PC-9 (cell line): ENCODE measurements at regions of chr5 and their contacts with region 1.

Region 1: GRCh38 chr5:172770675-172771438 is at the start of gene DUSP1:
- DNase-seq: peak; percentile 84 to 98
- H3K4me3 ChIP-seq: peak within 1 kb of the TSS; percentile 91
- H3K27ac ChIP-seq: peak within 1 kb of the TSS; percentile 93
- H3K4me1 ChIP-seq: peaks cover 61% of the 10 kb centered on the region
- H3K27me3 ChIP-seq: no peaks in the 10 kb centered on the region
- CTCF ChIP-seq: peak; percentile 50; the same call in 1 of the 2 replicates
- total RNA-seq, gene DUSP1: 10.3 and 18.4 TPM in 2 replicates

Region 2: DNA sequence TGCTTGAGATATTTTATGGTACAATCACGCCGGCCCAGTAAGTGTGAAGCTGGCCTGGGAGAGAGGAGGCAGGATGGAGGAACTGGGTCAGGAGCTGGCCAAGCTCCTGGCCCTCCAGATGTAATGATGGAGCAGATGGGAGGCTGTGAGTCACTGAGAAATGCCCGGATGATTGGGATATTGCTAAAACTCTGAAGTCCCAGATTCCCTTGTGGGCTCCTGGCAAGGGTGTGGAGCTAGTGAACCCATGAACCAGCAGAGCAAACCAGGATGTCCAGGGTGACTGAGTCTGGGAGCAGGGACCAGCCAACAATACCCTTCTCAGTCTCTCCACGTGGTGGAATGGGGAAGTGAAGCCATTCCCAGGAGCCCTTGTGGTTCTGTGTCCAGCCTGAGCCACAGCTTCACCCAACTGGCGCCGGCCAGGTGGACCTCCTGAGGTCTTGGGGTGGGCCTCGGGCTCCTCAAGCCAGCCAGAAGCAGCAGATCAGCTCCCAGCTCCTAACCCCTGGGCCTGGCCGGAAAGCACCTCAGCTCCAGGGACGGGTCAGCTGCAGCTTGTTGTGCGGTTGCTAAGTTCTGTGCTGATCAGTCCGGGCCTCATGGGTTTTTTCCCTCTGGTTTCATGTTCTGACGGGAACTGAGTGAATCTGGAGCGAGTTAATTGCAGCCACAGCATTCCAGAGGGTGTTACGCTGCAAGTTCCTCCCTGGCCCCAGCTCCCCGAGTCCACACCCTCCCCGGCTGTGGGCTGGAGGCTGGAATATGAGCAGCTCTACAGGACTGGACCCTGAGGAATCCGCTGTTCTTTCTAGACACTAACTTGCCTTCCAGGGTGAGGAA is 37.5 kb before region 1 on chr5:
- CTCF ChIA-PET with region 1: interaction called, 3 read pairs
- POLR2A ChIA-PET with region 1: interaction called, 9 read pairs
- intact Hi-C with region 1: loop called (anchors 1 kb)
- DNase-seq: peak; percentile 89
- H3K4me3 ChIP-seq: peak overlapping the region; percentile 5; the same call in 1 of the 2 replicates
- H3K27ac ChIP-seq: peak overlapping the region; percentile 96
- H3K4me1 ChIP-seq: peaks cover 44% of the 10 kb centered on the region
- H3K27me3 ChIP-seq: no peaks in the 10 kb centered on the region
- CTCF ChIP-seq: no peak

Region 3: DNA sequence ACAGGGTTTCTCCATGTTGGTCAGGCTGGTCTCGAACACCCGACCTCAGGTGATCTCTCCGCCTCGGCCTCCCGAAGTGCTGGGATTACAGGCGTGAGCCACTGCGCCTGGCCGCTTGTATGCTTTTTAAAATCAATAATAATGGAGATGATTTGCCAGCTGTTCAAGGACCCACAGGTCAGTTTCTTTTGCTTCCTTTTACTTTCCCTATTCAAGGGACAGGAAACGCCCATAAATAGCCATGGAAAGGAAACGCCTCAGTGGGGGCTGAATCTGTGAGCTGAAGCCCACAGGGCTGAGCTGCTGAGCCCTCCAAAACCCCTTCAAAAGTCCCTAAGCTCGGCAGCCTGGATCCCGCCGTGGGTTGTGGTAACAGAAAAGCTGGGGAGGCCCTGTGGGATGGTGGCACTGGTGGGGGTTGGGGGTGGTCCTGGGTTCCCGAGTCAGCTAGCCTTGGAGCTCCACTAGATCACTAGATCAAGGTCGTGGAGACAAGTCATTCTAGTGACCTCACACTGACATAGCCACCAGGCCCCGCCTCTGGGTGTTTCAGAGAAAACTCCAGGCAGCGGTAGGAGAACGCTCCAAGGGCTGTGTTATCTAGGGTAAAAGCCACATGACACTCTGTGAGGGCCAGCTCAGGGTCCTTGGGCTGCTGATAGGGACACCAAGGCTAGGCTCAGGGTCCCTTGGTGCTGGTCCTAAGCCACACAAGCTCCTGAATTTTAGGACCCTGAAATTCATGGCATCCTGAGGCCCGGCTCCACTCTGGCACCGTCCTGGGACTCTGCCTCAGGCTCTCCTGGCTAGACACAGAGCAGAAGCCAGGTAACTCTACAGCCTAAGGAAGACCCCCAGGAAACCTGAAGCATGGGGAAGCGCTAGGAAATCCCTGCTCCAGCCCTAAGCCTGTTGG is 18.2 kb after region 1 on chr5:
- CTCF ChIA-PET with region 1: no interaction called
- POLR2A ChIA-PET with region 1: no interaction called
- intact Hi-C with region 1: no loop called
- DNase-seq: no peak
- H3K4me3 ChIP-seq: no peak overlapping the region
- H3K27ac ChIP-seq: peak overlapping the region; percentile 13; the same call in 1 of the 2 replicates
- H3K4me1 ChIP-seq: peaks cover 25% of the 10 kb centered on the region
- H3K27me3 ChIP-seq: no peaks in the 10 kb centered on the region
- CTCF ChIP-seq: no peak

Region 4: DNA sequence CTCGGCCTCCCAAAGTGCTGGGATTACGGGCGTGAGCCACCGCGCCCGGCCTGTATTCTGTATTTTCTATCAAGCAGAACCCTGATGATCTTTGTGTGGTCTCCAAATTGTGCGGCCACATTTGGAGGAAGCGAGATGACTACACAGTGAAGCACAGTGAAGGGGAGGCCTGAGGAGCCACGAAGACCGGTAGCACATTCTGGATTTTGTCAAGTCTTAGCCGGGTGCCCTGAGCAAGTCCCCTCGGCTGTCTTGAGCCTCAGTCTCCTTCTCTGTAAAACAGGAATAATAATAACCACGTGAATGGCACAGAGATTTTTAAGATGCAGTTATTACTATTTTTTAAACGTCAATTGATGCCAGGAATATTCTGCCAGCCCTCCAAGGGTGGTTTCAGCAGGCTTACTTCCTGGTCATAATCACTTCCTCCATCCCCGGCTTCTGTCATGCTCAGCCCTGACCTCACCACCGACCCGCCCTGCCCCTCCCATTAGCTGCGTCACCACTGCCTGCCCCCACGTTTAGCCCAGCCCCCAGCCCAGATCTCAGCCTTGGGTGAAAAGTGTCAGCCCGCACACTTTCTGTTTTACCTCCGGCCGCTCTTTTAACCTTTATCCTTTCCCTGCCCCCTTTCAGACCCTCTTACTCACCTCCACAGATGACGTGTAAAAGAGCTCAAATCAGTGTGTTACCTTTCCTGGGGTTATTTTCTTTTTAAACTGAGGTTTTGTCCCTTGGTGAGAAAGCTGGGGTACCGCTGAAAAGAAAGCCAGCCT is 36.2 kb after region 1 on chr5:
- CTCF ChIA-PET with region 1: no interaction called
- POLR2A ChIA-PET with region 1: interaction called, 10 read pairs
- intact Hi-C with region 1: loop called (anchors 1 kb)
- DNase-seq: peak; percentile 86 to 89
- H3K4me3 ChIP-seq: peak overlapping the region; percentile 44; the same call in 1 of the 2 replicates
- H3K27ac ChIP-seq: peak overlapping the region; percentile 83
- H3K4me1 ChIP-seq: peaks cover 23% of the 10 kb centered on the region
- H3K27me3 ChIP-seq: no peaks in the 10 kb centered on the region
- CTCF ChIP-seq: no peak

Region 5: DNA sequence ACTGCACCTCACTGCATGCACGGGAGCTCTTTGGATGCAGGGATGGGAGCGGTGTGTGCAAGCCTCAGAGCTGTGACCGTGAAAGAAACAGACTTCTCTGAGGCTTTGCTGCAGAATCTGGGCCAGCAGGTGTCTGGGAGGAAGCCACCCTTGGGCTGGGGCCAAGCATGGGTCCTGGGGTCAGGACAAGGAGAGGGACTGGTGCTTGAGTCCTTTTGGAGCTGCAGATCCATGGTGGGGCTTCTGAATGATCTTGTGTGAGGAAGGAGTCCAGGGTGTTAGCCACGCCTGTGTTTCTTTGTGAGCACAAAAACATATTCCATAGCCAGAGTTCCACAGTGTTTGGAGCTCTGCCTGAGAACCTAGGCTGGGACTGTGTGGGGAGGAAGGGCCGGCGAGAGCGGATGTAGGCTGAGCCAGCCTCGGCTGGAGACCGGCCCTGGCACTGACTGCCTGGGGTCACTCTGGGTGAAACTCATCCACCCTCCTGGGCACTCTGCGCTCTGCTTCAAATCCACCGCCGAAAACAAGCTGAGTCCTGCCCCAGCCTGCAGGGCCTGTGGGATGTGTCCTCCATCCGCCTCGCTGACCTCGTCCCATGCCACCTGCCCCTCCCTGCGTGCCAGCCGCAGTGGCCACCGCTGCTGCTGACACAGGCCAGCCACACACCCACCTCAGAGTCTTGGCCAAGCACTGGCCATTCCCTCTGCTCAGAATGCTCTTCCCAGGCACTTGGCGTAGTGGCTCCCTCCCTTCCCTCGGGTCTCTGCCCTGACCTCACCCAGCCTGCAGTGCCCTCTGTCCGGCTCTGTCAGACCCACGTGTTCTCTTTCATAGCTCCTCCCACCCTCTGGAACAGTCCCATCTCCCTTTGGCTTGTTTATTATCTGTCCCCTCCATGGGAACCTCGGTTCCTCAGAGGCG is 89.9 kb after region 1 on chr5:
- CTCF ChIA-PET with region 1: no interaction called
- POLR2A ChIA-PET with region 1: interaction called, 24 read pairs
- intact Hi-C with region 1: loop called (anchors 1 kb)
- DNase-seq: peak; percentile 64 to 90
- H3K4me3 ChIP-seq: no peak overlapping the region
- H3K27ac ChIP-seq: peak overlapping the region; percentile 99
- H3K4me1 ChIP-seq: peaks cover 65% of the 10 kb centered on the region
- H3K27me3 ChIP-seq: no peaks in the 10 kb centered on the region
- CTCF ChIP-seq: no peak

Region 6: GRCh38 chr5:172897481-172898217 is 126.8 kb after region 1 on chr5:
- CTCF ChIA-PET with region 1: no interaction called
- POLR2A ChIA-PET with region 1: no interaction called
- intact Hi-C with region 1: no loop called
- DNase-seq: no peak
- H3K4me3 ChIP-seq: no peak overlapping the region
- H3K27ac ChIP-seq: 0 out of 2 replicates have a peak overlapping the region, but pooled peaks have one; percentile 12
- H3K4me1 ChIP-seq: peaks cover 16% of the 10 kb centered on the region
- H3K27me3 ChIP-seq: no peaks in the 10 kb centered on the region
- CTCF ChIP-seq: no peak

Region 7: GRCh38 chr5:172958331-172959046 is 187.6 kb after region 1 on chr5:
- CTCF ChIA-PET with region 1: no interaction called
- POLR2A ChIA-PET with region 1: interaction called, 5 read pairs
- intact Hi-C with region 1: loop called (anchors 1 kb)
- DNase-seq: peak; percentile 55 to 74
- H3K4me3 ChIP-seq: peak overlapping the region; percentile 99
- H3K27ac ChIP-seq: peak overlapping the region; percentile 72
- H3K4me1 ChIP-seq: peaks cover 14% of the 10 kb centered on the region
- H3K27me3 ChIP-seq: no peaks in the 10 kb centered on the region
- CTCF ChIP-seq: no peak